CD8-positive, alpha-beta T cell (primary cell): ENCODE measurements at regions of chr12 and their contacts with region 1.

Region 1: DNA sequence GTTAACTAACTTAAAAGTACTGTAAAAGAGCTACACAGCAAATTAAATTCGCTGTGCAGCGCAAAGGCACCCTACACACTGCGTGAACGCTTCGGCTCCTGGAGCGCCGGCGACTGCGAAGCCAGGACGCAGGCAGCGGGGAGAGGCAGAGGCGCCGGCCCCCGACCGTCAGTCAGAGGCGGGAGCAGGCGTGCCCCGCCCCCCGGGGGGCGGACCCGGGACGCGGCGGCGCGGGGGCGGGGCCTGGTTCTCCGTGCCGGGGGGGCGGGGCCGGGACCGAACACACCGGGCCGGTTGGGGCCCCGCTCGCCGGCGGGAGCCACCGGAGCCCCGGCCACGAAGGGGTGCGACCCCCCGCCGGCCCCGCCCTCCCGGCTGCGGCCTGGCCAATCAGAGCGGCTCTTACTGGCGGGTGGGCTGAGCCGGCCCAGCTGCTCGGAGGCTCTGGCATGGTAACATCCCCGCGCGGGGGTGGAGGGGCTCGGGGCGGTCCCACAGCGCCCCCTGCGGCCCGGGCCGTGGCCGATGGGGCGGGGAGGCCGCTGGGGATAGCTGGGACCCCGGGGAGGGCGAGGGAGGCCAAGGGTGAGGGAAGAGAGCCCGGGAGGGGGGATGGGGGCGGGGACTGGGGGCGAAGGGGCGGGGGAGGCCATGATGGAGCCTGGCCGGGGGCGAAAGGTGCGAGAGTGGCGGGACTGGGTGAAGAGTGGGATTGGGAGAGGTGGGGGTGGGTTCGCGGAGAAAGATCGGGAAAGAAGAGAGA is at the start of gene PRPF40B:
- DNase-seq: peak; percentile 68 to 92 (median 84)
- ATAC-seq: peak; percentile 78
- H3K4me3 ChIP-seq: peak within 1 kb of the TSS; percentile 56 to 82
- H3K4me3 Mint-ChIP-seq: peak within 1 kb of the TSS; percentile 88
- H3K27ac ChIP-seq: peak within 1 kb of the TSS; percentile 56 to 63
- H3K27ac Mint-ChIP-seq: peak within 1 kb of the TSS; percentile 91
- H3K4me1 ChIP-seq: peaks cover 34% of the 10 kb centered on the region
- H3K4me1 Mint-ChIP-seq: peaks cover 27% of the 10 kb centered on the region
- H3K27me3 ChIP-seq: no peaks in the 10 kb centered on the region
- H3K27me3 Mint-ChIP-seq: no peaks in the 10 kb centered on the region
- CTCF ChIP-seq: peak; percentile 46
- total RNA-seq, gene PRPF40B: 3.4 to 4.2 TPM

Region 2: DNA sequence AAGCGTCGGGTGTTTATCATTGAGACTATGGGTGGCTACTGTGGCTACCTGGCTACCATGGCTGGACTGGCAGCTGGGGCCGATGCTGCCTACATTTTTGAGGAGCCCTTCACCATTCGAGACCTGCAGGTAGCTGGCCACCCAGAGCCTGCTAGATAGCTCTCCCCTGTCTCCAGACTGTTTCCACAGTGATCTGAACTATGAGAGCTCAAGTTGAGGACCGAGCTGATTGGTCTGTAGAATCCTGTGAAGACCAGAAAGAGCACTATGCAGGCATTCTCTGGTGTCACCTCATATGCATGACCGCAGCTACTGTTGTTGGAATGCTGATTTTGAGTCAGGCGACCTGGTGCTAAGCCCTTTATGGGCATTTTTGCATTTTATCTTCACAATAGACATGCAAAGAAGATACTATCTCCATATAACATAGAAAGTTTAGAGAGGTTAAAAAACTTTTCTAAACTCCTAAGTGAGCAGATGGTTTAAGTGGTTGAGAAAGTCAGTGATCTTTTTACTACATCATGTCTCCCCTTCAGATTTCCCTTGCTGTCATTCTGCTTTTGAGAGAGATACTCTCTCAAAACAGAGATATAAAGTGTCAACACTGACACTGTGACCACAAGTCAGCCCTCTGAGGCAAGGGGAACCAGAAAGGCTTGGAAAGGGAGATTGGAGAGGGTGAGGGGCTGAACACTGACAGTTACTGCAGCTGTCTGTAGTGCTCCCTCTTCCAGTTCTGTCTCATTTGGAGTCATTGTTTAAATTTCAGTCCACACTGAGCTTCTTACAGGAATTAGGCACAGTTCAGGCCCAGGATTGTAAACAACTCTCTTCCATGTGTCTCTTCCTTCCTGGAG is 1480.3 kb before region 1 on chr12:
- CTCF ChIA-PET with region 1: no interaction called
- POLR2A ChIA-PET with region 1: no interaction called
- intact Hi-C with region 1: no loop called
- DNase-seq: no peak
- ATAC-seq: no peak
- H3K4me3 ChIP-seq: no peak overlapping the region
- H3K4me3 Mint-ChIP-seq: no peak overlapping the region
- H3K27ac ChIP-seq: no peak overlapping the region
- H3K27ac Mint-ChIP-seq: peak overlapping the region; percentile 37
- H3K4me1 ChIP-seq: no peaks in the 10 kb centered on the region
- H3K4me1 Mint-ChIP-seq: peaks cover 2% of the 10 kb centered on the region
- H3K27me3 ChIP-seq: no peaks in the 10 kb centered on the region
- H3K27me3 Mint-ChIP-seq: no peaks in the 10 kb centered on the region
- CTCF ChIP-seq: no peak

Region 3: GRCh38 chr12:49366652-49367380 is 256.5 kb before region 1 on chr12:
- CTCF ChIA-PET with region 1: no interaction called
- POLR2A ChIA-PET with region 1: no interaction called
- intact Hi-C with region 1: loop called (anchors 2 to 5 kb)
- DNase-seq: peak; percentile 74 to 91 (median 84)
- ATAC-seq: peak; percentile 83
- H3K4me3 ChIP-seq: peak overlapping the region; percentile 91 to 100
- H3K4me3 Mint-ChIP-seq: peak overlapping the region; percentile 96
- H3K27ac ChIP-seq: peak overlapping the region; percentile 79 to 85
- H3K27ac Mint-ChIP-seq: peak overlapping the region; percentile 91
- H3K4me1 ChIP-seq: peaks cover 16% of the 10 kb centered on the region
- H3K4me1 Mint-ChIP-seq: peaks cover 31% of the 10 kb centered on the region
- H3K27me3 ChIP-seq: no peaks in the 10 kb centered on the region
- H3K27me3 Mint-ChIP-seq: no peaks in the 10 kb centered on the region
- CTCF ChIP-seq: no peak

Region 4: GRCh38 chr12:49567611-49568441 is 55.5 kb before region 1 on chr12 and contains the start of gene MCRS1:
- CTCF ChIA-PET with region 1: interaction called, 4 read pairs
- POLR2A ChIA-PET with region 1: interaction called, 4 read pairs
- intact Hi-C with region 1: loop called (anchors 1 kb)
- DNase-seq: peak; percentile 74 to 96 (median 91)
- ATAC-seq: peak; percentile 85
- H3K4me3 ChIP-seq: peak within 1 kb of the TSS; percentile 80 to 89
- H3K4me3 Mint-ChIP-seq: peak within 1 kb of the TSS; percentile 99
- H3K27ac ChIP-seq: peak within 1 kb of the TSS; percentile 93 to 98
- H3K27ac Mint-ChIP-seq: peak within 1 kb of the TSS; percentile 100
- H3K4me1 ChIP-seq: peaks cover 59% of the 10 kb centered on the region
- H3K4me1 Mint-ChIP-seq: peaks cover 63% of the 10 kb centered on the region
- H3K27me3 ChIP-seq: no peaks in the 10 kb centered on the region
- H3K27me3 Mint-ChIP-seq: no peaks in the 10 kb centered on the region
- CTCF ChIP-seq: no peak
- total RNA-seq, gene MCRS1: 63.7 to 70.9 TPM

Region 5: GRCh38 chr12:49636979-49637755 is 13.8 kb after region 1 on chr12:
- CTCF ChIA-PET with region 1: interaction called, 23 read pairs
- POLR2A ChIA-PET with region 1: interaction called, 19 read pairs
- intact Hi-C with region 1: no loop called
- DNase-seq: peak in 8 of 9 experiments; percentile 39 to 76 (median 62)
- ATAC-seq: peak; percentile 99
- H3K4me3 ChIP-seq: no peak overlapping the region
- H3K4me3 Mint-ChIP-seq: no peak overlapping the region
- H3K27ac ChIP-seq: no peak overlapping the region
- H3K27ac Mint-ChIP-seq: peak overlapping the region; percentile 46
- H3K4me1 ChIP-seq: peaks cover 21% of the 10 kb centered on the region
- H3K4me1 Mint-ChIP-seq: peaks cover 29% of the 10 kb centered on the region
- H3K27me3 ChIP-seq: no peaks in the 10 kb centered on the region
- H3K27me3 Mint-ChIP-seq: no peaks in the 10 kb centered on the region
- CTCF ChIP-seq: peak; percentile 65

Region 6: GRCh38 chr12:49662998-49663843 is 39.9 kb after region 1 on chr12:
- CTCF ChIA-PET with region 1: no interaction called
- POLR2A ChIA-PET with region 1: interaction called, 12 read pairs
- intact Hi-C with region 1: no loop called
- DNase-seq: peak; percentile 47 to 92 (median 80)
- ATAC-seq: peak; percentile 98
- H3K4me3 ChIP-seq: peak overlapping the region; percentile 27 to 42
- H3K4me3 Mint-ChIP-seq: peak overlapping the region; percentile 83
- H3K27ac ChIP-seq: peak overlapping the region; percentile 61 to 93
- H3K27ac Mint-ChIP-seq: peak overlapping the region; percentile 99
- H3K4me1 ChIP-seq: peaks cover 59% of the 10 kb centered on the region
- H3K4me1 Mint-ChIP-seq: peaks cover 83% of the 10 kb centered on the region
- H3K27me3 ChIP-seq: no peaks in the 10 kb centered on the region
- H3K27me3 Mint-ChIP-seq: no peaks in the 10 kb centered on the region
- CTCF ChIP-seq: no peak

Region 7: DNA sequence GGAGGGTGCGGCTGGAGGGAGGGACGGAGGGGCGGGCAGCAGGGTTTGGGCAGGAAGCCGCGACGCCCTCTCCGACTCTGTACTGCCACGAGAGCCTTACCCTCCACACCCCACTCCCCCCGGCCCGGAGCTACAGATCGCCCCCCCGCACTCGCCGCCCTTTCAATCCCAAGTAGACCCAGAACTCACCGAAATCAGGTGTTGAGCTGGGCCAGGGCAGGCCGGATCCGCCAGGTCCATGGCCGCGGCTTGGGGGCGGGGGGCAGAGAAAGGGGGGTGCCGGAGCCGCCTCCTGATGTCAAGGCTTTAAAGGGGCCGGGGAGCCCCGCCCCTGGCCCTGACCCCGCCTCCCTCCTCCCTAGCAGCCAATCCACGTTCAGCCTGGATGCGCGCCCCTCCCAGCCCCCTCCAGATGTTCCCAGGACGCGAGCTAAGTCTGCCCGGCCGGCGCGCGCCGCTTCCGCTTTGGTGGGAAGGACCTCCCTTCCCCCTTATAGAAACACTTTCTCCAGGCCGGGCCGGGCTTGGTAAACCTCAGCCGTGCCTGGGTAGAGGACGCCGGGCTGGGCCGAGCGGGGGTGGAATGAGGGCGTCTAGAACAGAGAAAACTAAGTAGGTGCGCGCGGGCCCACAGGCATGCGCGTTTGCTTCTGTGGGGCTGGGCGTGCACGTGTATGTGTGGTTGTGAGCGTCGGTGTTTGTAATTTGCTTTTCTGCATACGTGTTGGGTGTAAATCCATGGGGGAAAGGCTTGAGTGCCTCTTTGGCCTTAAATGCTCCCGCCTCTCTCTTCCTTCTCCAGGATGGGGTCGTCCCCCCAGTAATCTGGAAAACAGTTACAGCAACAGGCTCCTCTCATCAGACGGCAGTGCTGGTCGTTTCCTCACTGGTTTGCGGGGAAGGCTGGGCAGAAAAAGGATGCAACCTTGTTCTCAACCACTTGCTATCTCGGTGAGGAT is 205.1 kb after region 1 on chr12 and contains the start of gene NCKAP5L:
- CTCF ChIA-PET with region 1: no interaction called
- POLR2A ChIA-PET with region 1: no interaction called
- intact Hi-C with region 1: loop called (anchors 5 kb)
- DNase-seq: peak; percentile 86 to 96 (median 94)
- ATAC-seq: peak; percentile 97
- H3K4me3 ChIP-seq: peak within 1 kb of the TSS; percentile 68 to 91
- H3K4me3 Mint-ChIP-seq: peak within 1 kb of the TSS; percentile 97
- H3K27ac ChIP-seq: peak within 1 kb of the TSS; percentile 65 to 69
- H3K27ac Mint-ChIP-seq: peak within 1 kb of the TSS; percentile 97
- H3K4me1 ChIP-seq: peaks cover 15% of the 10 kb centered on the region
- H3K4me1 Mint-ChIP-seq: peaks cover 39% of the 10 kb centered on the region
- H3K27me3 ChIP-seq: no peaks in the 10 kb centered on the region
- H3K27me3 Mint-ChIP-seq: no peaks in the 10 kb centered on the region
- CTCF ChIP-seq: no peak
- total RNA-seq, gene NCKAP5L: 10.6 to 10.7 TPM